Spleen (tissue), 13 donors: ENCODE measurements at regions of chr1 and their contacts with region 1.

Region 1: DNA sequence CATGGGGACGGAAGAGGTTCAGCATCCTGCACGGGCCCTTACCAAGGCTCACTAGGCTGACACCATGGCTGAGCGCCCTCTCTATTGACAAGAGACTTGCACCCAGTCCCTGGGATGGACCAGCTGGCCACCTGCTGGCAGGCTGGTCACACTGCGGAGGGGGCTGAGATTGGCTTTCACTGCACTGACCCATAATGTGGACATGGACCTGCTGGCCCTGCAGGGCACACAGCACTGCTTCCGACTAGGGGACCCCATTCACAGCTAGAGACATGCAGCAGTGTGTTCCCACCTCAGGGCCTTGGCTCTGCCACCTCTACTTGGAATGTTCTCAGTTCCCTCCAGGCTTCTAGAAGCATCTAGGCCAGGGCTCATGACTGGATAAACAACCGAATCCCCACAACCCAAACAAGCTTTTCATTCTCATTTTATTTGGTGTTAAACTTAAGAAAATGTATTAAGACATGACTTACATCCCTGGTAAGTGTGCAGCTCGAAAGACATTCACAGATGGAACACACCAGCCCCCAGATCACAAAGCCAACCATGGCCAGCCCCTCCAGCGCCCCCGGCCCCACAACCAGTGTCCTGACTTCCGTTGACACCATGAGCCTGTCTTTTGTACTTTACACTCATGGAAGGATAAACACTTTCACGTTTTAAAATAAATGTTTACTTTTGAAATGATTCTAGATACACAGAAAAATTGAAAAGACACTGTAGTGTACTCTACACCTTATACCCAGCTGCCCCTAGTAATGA is 9.3 kb upstream of the SRARP start:
- DNase-seq: peak; percentile 86
- H3K4me3 ChIP-seq: no peak overlapping the region
- H3K27ac ChIP-seq: no peak overlapping the region
- H3K4me1 ChIP-seq: no peaks in the 10 kb centered on the region
- H3K27me3 ChIP-seq: no peaks in the 10 kb centered on the region
- CTCF ChIP-seq: peak; percentile 64 to 95 (median 83)
- POLR2A ChIP-seq: no peak

Region 2: GRCh38 chr1:15799004-15799936 is 195.5 kb before region 1 on chr1:
- intact Hi-C with region 1: loop called (anchors 5 kb)
- DNase-seq: no peak
- H3K4me3 ChIP-seq: no peak overlapping the region
- H3K27ac ChIP-seq: peak overlapping the region in 5 of 8 donors; percentile 48 to 74 (median 72)
- H3K4me1 ChIP-seq: peaks cover 0 to 26% (median 10%) of the 10 kb centered on the region in 6 donors
- H3K27me3 ChIP-seq: no peaks in the 10 kb centered on the region
- CTCF ChIP-seq: no peak
- POLR2A ChIP-seq: no peak

Region 3: GRCh38 chr1:16055613-16056520 is 61.1 kb after region 1 on chr1:
- intact Hi-C with region 1: no loop called
- DNase-seq: peak; percentile 93
- H3K4me3 ChIP-seq: no peak overlapping the region
- H3K27ac ChIP-seq: no peak overlapping the region
- H3K4me1 ChIP-seq: peaks cover 0 to 8% (median 3%) of the 10 kb centered on the region in 6 donors
- H3K27me3 ChIP-seq: peaks cover 0 to 11% (median 0%) of the 10 kb centered on the region in 7 donors
- CTCF ChIP-seq: peak; percentile 64 to 93 (median 89)
- POLR2A ChIP-seq: no peak

Region 4: DNA sequence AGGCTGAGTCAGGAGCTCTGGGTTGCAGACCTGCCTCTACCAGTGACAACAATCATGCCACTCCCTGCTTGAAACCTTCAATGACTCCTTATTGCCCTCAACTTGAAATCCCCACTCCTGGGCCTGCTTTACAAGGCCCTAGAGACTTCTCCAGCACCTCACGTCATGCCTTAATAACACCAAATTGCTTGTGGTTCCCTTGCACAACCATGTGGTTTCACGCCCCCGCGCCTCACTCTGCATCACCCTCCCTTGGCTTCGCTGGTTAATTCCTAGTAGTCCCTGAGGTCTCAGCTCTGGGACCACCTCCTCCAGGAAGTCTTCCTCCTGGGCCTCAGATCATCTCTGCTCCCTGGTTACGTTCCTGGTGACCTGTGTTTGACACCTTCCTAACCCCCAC is 128.1 kb after region 1 on chr1:
- intact Hi-C with region 1: no loop called
- DNase-seq: peak; percentile 76
- H3K4me3 ChIP-seq: no peak overlapping the region
- H3K27ac ChIP-seq: no peak overlapping the region
- H3K4me1 ChIP-seq: peaks cover 4 to 31% (median 13%) of the 10 kb centered on the region in 6 donors
- H3K27me3 ChIP-seq: peaks cover 0 to 14% (median 0%) of the 10 kb centered on the region in 7 donors
- CTCF ChIP-seq: no peak
- POLR2A ChIP-seq: no peak